Psoas muscle (tissue), 8 donors: ENCODE measurements at regions of chr4 and their contacts with region 1.

Region 1: GRCh38 chr4:79678472-79679202 is 270.6 kb upstream of the GK2 start:
- DNase-seq: no peak
- ATAC-seq: no peak
- H3K4me3 ChIP-seq: no peak overlapping the region
- H3K27ac ChIP-seq: no peak overlapping the region
- H3K4me1 ChIP-seq: no peaks in the 10 kb centered on the region
- H3K27me3 ChIP-seq: no peaks in the 10 kb centered on the region
- CTCF ChIP-seq: no peak

Region 2: GRCh38 chr4:79227860-79228259 is 450.8 kb before region 1 on chr4:
- intact Hi-C with region 1: loop called in 1 of 2 experiments (anchors 5 kb)
- DNase-seq: peak in 1 of 2 donors; percentile 56
- ATAC-seq: no peak
- H3K4me3 ChIP-seq: no peak overlapping the region
- H3K27ac ChIP-seq: no peak overlapping the region
- H3K4me1 ChIP-seq: no peaks in the 10 kb centered on the region
- H3K27me3 ChIP-seq: no peaks in the 10 kb centered on the region
- CTCF ChIP-seq: no peak